Dendritic cell treated with granulocyte-macrophage colony-stimulating factor and Interleukin-4, amounts not matched to agents 40 ng/mL and 50 ng/mL, for 4 days (primary cell): ENCODE measurements at regions of chr1 and their contacts with region 1.

Region 1: GRCh38 chr1:234881893-234882771 is 246.5 kb downstream of the TOMM20 start:
- H3K4me3 Mint-ChIP-seq: no peak overlapping the region
- H3K27ac Mint-ChIP-seq: peak overlapping the region; percentile 76
- H3K4me1 Mint-ChIP-seq: peaks cover 98% of the 10 kb centered on the region
- H3K27me3 Mint-ChIP-seq: no peaks in the 10 kb centered on the region

Region 2: GRCh38 chr1:234851450-234852438 is 30.4 kb before region 1 on chr1:
- intact Hi-C with region 1: no loop called
- H3K4me3 Mint-ChIP-seq: peak overlapping the region; percentile 9
- H3K27ac Mint-ChIP-seq: peak overlapping the region; percentile 96
- H3K4me1 Mint-ChIP-seq: peaks cover 91% of the 10 kb centered on the region
- H3K27me3 Mint-ChIP-seq: no peaks in the 10 kb centered on the region

Region 3: GRCh38 chr1:234918181-234918841 is 36.2 kb after region 1 on chr1:
- intact Hi-C with region 1: loop called (anchors 5 kb)
- H3K4me3 Mint-ChIP-seq: peak overlapping the region; percentile 55
- H3K27ac Mint-ChIP-seq: peak overlapping the region; percentile 81
- H3K4me1 Mint-ChIP-seq: peaks cover 92% of the 10 kb centered on the region
- H3K27me3 Mint-ChIP-seq: no peaks in the 10 kb centered on the region

Region 4: DNA sequence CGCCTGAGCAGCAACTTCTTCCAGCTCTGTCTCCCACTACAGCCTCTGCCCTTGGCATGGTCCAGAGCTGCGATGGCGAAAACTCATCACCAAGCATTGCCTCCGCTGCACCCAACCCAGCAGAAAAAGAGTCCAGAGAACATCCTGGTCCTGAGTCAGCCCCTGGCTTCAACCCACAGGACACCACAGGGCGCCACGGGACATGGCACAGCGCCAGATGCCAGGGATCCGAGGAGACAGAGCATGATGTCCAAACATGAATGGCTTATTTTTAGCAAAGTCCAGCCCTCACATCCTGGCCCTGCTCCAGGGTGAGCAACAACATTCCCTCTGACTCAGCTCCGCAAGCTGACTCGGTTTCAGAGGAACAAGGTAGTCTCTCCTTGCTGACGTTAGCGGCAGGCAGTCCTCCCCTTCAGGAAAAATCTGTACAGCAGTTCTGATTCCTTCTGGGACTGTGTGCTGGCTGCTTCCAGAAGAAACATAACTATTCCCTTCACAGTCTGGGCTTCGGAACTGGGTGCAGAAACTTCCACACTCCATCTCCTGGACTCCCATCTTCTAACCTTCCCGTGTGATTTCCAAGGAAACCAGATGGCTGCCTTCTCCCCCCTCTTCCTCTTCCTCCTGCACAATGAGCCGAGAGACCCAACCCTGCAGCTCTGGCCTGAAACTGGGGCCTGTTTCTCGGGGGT is 115.2 kb after region 1 on chr1:
- intact Hi-C with region 1: no loop called
- H3K4me3 Mint-ChIP-seq: no peak overlapping the region
- H3K27ac Mint-ChIP-seq: peak overlapping the region; percentile 78
- H3K4me1 Mint-ChIP-seq: peaks cover 45% of the 10 kb centered on the region
- H3K27me3 Mint-ChIP-seq: no peaks in the 10 kb centered on the region

Region 5: GRCh38 chr1:235367000-235367908 is 485.1 kb after region 1 on chr1 and contains the start of gene TBCE:
- intact Hi-C with region 1: no loop called
- H3K4me3 Mint-ChIP-seq: peak within 1 kb of the TSS; percentile 93
- H3K27ac Mint-ChIP-seq: peak within 1 kb of the TSS; percentile 91
- H3K4me1 Mint-ChIP-seq: peaks cover 25% of the 10 kb centered on the region
- H3K27me3 Mint-ChIP-seq: no peaks in the 10 kb centered on the region